HepG2 (cell line): ENCODE measurements at regions of chr7 and their contacts with region 1.

Region 1: GRCh38 chr7:85554236-85555178 is 367.7 kb upstream of the SEMA3D start:
- DNase-seq: peak; percentile 59
- ATAC-seq: peak; percentile 72
- H3K4me3 ChIP-seq: no peak overlapping the region
- H3K27ac ChIP-seq: no peak overlapping the region
- H3K4me1 ChIP-seq: no peaks in the 10 kb centered on the region
- H3K27me3 ChIP-seq: no peaks in the 10 kb centered on the region
- CTCF ChIP-seq: peak; percentile 75
- EP300 ChIP-seq: no peak
- POLR2A ChIP-seq: no peak
- RAD21 ChIP-seq: peak; percentile 57; the same call in 1 of the 2 replicates

Region 2: DNA sequence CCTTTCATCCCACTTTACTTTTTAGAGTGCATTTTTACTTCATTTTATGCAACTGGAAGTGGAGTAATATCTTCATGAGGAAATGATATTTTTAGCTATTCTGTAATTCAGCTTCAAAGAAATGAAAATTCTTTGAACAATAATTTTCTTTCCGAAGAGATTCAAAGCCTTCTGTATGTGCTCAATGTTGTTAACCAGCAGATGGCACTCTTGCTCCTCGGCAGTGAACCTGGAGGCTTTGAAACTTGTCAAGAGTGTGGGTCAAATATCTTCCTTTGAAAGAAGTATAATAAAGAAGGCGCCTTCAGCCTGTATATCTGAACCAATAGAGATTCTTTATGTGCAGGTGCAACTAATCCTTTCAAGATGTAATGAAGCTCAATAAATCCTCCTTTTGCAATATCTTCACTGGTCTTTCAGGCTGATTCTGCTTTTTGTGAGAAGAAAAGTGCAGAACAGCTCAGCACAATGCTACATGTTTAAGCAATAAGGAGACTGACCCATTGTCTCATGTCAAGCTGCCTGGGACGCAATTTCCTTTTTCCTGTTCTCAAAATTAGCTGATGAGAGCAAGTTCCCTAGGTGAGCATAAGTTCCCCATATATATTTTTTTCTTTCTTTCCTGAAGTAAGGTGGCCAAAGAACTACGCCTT is 1618.3 kb before region 1 on chr7:
- CTCF ChIA-PET with region 1: no interaction called
- POLR2A ChIA-PET with region 1: no interaction called
- in situ Hi-C with region 1: no loop called
- intact Hi-C with region 1: loop called (anchors 5 kb)
- DNase-seq: peak; percentile 48
- ATAC-seq: peak; percentile 79
- H3K4me3 ChIP-seq: no peak overlapping the region
- H3K27ac ChIP-seq: no peak overlapping the region
- H3K4me1 ChIP-seq: no peaks in the 10 kb centered on the region
- H3K27me3 ChIP-seq: no peaks in the 10 kb centered on the region; a peak in 1 of 5 replicates
- CTCF ChIP-seq: peak; percentile 74
- EP300 ChIP-seq: no peak
- POLR2A ChIP-seq: no peak
- RAD21 ChIP-seq: peak; percentile 43; the same call in 1 of the 2 replicates

Region 3: DNA sequence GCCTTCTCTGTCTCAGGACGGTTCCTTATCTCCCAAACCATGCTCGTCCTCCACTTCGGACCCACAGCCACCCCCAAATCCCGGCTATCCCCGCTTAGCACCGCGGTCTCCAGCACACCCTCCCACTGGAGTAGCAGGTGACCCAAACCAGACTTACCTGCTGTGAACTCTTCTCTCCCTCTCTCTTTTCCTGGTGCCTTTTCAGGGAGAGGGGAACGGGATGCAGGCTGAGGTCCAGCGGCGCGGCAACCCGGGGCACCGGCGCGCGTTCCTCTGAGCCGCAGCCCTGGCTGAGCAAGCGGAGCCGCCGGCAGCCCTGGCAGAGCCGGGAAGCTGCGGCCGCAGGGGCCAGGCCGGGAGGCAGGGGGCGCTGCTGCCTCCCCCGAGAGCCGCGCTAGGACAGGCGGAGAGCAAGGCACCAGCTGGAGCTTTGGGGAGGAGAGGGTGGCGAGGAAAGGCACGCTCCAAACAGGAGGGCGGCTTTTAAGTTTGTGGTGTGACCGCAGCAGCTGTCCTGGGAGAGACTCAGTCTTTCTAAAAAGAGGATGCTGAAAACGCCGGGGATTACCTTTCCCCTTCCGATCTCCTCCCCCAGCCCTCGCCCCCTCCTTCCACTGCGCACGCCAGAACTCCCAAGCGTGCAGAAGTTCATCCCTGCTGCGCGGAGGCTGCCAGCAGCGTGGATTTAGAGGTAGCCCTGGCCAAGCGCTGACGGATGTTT is 367.8 kb before region 1 on chr7 and contains the start of gene SEMA3D:
- CTCF ChIA-PET with region 1: interaction called, 4 read pairs
- POLR2A ChIA-PET with region 1: no interaction called
- in situ Hi-C with region 1: no loop called
- intact Hi-C with region 1: loop called (anchors 1 kb)
- DNase-seq: peak; percentile 12
- ATAC-seq: peak; percentile 100
- H3K4me3 ChIP-seq: peak within 1 kb of the TSS in 2 of 3 experiments; percentile 21 to 62; a peak in 2 of 6 replicates
- H3K27ac ChIP-seq: no peak within 1 kb of the TSS
- H3K4me1 ChIP-seq: peaks cover 6% of the 10 kb centered on the region; the same call in 1 of the 2 replicates
- H3K27me3 ChIP-seq: peaks cover 1 to 30% of the 10 kb centered on the region in 2 experiments; a peak in 4 of 5 replicates
- CTCF ChIP-seq: peak; percentile 86
- EP300 ChIP-seq: no peak
- POLR2A ChIP-seq: no peak
- RAD21 ChIP-seq: peak; percentile 72
- total RNA-seq, gene SEMA3D: 0.07 TPM in 1 of 2 replicates, not detected in the other

Region 4: GRCh38 chr7:85287106-85287825 is 267.2 kb before region 1 on chr7:
- CTCF ChIA-PET with region 1: no interaction called
- POLR2A ChIA-PET with region 1: no interaction called
- in situ Hi-C with region 1: no loop called
- intact Hi-C with region 1: loop called (anchors 10 kb)
- DNase-seq: no peak
- ATAC-seq: no peak
- H3K4me3 ChIP-seq: no peak overlapping the region
- H3K27ac ChIP-seq: no peak overlapping the region
- H3K4me1 ChIP-seq: peaks cover 14% of the 10 kb centered on the region
- H3K27me3 ChIP-seq: no peaks in the 10 kb centered on the region
- CTCF ChIP-seq: no peak
- EP300 ChIP-seq: no peak
- POLR2A ChIP-seq: no peak
- RAD21 ChIP-seq: no peak

Region 5: GRCh38 chr7:85464042-85464651 is 90.4 kb before region 1 on chr7:
- CTCF ChIA-PET with region 1: no interaction called
- POLR2A ChIA-PET with region 1: no interaction called
- in situ Hi-C with region 1: no loop called
- intact Hi-C with region 1: loop called (anchors 2 kb)
- DNase-seq: no peak
- ATAC-seq: no peak
- H3K4me3 ChIP-seq: no peak overlapping the region
- H3K27ac ChIP-seq: no peak overlapping the region
- H3K4me1 ChIP-seq: no peaks in the 10 kb centered on the region
- H3K27me3 ChIP-seq: no peaks in the 10 kb centered on the region
- CTCF ChIP-seq: 0 out of 2 replicates have a peak, but pooled peaks have one; percentile 6
- EP300 ChIP-seq: no peak
- POLR2A ChIP-seq: no peak
- RAD21 ChIP-seq: no peak

Region 6: GRCh38 chr7:85750454-85750949 is 196.0 kb after region 1 on chr7:
- CTCF ChIA-PET with region 1: no interaction called
- POLR2A ChIA-PET with region 1: no interaction called
- in situ Hi-C with region 1: no loop called
- intact Hi-C with region 1: loop called (anchors 10 kb)
- DNase-seq: peak; percentile 36
- ATAC-seq: peak; percentile 97
- H3K4me3 ChIP-seq: no peak overlapping the region
- H3K27ac ChIP-seq: no peak overlapping the region
- H3K4me1 ChIP-seq: no peaks in the 10 kb centered on the region
- H3K27me3 ChIP-seq: no peaks in the 10 kb centered on the region
- CTCF ChIP-seq: peak; percentile 77
- EP300 ChIP-seq: no peak
- POLR2A ChIP-seq: no peak
- RAD21 ChIP-seq: peak; percentile 35; the same call in 1 of the 2 replicates